ENCODE measurements at regions of chr15 and their contacts with region 1.

Region 1: DNA sequence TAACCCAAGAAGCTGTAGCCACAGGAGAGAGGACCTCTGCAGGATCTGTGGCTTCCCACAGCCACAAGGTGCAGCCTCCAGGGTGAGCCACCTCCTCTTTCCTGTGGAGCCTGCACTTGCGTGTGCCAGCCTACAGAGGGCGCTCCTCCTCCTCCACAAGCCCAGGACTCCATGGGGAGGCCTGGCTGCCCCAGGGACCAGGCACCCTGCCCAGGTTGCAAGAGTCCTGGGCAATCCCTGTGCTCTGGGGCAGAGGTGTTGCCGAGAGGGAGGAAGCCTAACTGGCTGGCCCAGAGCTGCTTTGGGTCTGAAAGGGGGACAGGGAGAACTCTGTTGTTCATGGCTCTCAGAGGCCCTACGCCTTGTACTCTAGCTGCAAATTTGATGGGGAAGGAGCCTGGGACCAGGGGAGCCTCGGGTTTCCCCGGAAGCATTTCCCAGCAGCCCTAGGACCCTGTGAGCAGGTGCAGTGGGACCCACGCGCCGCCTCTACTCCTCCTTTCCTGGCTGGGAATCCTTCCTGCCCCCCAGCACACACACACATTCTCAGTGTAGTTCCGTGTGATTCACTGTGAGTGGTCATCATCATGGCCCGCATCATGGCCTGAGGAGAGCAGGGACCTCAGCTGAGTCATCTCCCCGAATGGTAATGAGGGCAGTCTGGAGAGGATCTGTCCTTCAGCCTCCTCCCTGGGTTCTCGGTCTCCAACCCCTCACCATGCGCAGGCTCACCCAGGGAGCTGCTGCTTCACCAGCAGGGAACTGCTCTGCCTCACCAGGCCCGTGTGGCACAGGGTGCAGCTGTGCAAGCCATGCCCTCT is 24.3 kb downstream of the TBC1D21 start:
- DNase-seq: peak; percentile 77
- H3K4me3 Mint-ChIP-seq: no peak overlapping the region
- H3K27ac Mint-ChIP-seq: no peak overlapping the region
- H3K4me1 Mint-ChIP-seq: no peaks in the 10 kb centered on the region
- H3K27me3 Mint-ChIP-seq: peaks cover 2% of the 10 kb centered on the region

Region 2: GRCh38 chr15:73873889-73874511 is 23.7 kb before region 1 on chr15:
- CTCF ChIA-PET with region 1: interaction called, 12 read pairs
- intact Hi-C with region 1: no loop called
- DNase-seq: peak; percentile 51
- H3K4me3 Mint-ChIP-seq: no peak overlapping the region
- H3K27ac Mint-ChIP-seq: no peak overlapping the region
- H3K4me1 Mint-ChIP-seq: no peaks in the 10 kb centered on the region
- H3K27me3 Mint-ChIP-seq: peaks cover 26% of the 10 kb centered on the region

Region 3: DNA sequence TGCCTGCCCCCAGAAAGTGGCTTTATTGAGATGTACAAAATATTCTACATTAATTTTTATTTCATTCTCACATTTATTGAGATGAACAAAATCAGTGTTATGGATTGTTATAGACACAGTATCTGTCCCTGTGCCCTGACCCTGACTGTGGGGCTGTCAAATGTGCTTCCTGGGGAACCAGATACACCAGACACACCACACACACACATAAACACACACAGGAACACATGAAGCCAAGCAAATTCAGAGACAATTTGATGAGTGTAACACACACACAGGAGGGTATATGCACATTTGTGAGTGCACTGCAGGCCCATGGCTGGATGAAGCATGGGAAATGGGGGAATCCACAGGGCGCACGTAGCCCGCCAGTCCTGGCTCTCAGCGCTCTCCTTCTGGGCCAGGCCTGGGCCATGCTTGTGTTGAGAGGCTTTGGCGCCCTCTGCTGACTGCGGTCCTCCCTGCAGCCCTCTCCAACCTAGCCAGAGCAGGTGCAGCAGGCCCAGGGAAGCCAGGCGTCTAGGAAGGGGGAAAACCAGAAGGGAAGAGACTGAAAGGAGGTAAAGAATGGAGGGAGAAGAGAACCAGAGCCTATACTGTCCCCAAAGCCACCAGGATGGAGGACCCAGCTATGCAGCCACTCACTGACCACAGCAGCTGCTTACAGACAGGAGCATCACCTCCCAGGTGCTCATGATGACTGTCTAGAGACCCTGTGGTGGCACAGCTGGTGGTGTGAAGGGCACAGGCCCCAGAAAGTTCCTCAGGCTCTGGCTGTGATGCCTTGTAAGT is 10.6 kb after region 1 on chr15:
- CTCF ChIA-PET with region 1: interaction called, 22 read pairs
- intact Hi-C with region 1: loop called (anchors 1 kb)
- DNase-seq: peak; percentile 89
- H3K4me3 Mint-ChIP-seq: no peak overlapping the region
- H3K27ac Mint-ChIP-seq: no peak overlapping the region
- H3K4me1 Mint-ChIP-seq: no peaks in the 10 kb centered on the region
- H3K27me3 Mint-ChIP-seq: no peaks in the 10 kb centered on the region

Region 4: DNA sequence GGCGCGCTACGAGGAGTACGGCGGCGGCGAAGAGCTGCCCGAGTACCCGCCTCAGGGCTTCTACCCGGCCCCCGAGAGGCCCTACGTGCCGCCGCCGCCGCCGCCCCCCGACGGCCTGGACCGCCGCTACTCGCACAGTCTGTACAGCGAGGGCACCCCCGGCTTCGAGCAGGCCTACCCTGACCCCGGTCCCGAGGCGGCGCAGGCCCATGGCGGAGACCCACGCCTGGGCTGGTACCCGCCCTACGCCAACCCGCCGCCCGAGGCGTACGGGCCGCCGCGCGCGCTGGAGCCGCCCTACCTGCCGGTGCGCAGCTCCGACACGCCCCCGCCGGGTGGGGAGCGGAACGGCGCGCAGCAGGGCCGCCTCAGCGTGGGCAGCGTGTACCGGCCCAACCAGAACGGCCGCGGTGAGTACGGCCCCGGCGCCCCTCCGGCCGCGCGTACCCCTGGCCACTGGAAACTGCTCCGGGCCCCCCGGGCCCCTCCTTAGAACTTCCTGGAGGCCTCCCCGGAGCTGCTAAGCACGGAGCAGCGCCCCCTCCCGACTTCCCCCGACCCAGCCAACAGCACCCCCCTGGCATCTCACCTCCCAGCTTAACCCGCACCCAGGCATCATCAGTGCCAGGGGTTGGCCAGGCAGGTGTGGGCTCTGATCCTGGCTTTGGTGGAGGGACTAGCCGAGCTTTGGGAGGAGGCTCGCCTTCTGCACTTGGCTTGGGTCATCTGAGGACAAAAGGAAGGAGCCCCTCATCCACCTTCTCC is 30.0 kb after region 1 on chr15:
- CTCF ChIA-PET with region 1: interaction called, 13 read pairs
- intact Hi-C with region 1: loop called (anchors 1 kb)
- DNase-seq: peak; percentile 84
- H3K4me3 Mint-ChIP-seq: peak overlapping the region; percentile 72
- H3K27ac Mint-ChIP-seq: no peak overlapping the region
- H3K4me1 Mint-ChIP-seq: peaks cover 33% of the 10 kb centered on the region
- H3K27me3 Mint-ChIP-seq: no peaks in the 10 kb centered on the region

Region 5: DNA sequence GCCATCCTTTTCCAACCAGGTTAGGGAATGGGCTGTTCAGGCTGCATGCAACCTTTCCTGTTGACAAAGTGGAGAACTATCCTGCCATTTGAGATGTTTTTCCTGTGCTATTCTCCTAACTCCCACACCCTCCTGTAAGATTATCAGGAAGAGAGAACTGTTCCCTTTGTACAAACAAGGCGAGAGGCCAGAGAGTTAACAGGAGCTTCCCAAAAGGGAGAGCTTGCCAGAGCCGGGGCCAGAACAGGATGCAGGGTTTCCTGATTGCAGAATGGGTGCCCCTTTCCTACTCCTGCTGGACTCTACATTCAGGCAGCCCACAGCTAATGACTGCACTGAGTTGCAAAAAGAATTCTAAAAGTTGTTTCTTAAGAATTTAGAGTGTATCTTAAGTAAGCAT is 114.0 kb after region 1 on chr15:
- CTCF ChIA-PET with region 1: no interaction called
- intact Hi-C with region 1: no loop called
- DNase-seq: no peak
- H3K4me3 Mint-ChIP-seq: no peak overlapping the region
- H3K27ac Mint-ChIP-seq: no peak overlapping the region
- H3K4me1 Mint-ChIP-seq: peaks cover 61% of the 10 kb centered on the region
- H3K27me3 Mint-ChIP-seq: no peaks in the 10 kb centered on the region